Transverse colon (tissue), 4 donors: ENCODE measurements at regions of chr11 and their contacts with region 1.

Region 1: GRCh38 chr11:73184953-73185671 is 33.0 kb upstream of the P2RY2 start:
- DNase-seq: peak; percentile 82
- H3K4me3 ChIP-seq: no peak overlapping the region
- H3K27ac ChIP-seq: peak overlapping the region in 1 of 4 donors; percentile 28
- H3K4me1 ChIP-seq: peaks cover 0 to 17% (median 6%) of the 10 kb centered on the region in 4 donors
- H3K27me3 ChIP-seq: no peaks in the 10 kb centered on the region
- CTCF ChIP-seq: peak; percentile 78 to 93 (median 89)
- EP300 ChIP-seq: no peak
- POLR2A ChIP-seq: no peak

Region 2: GRCh38 chr11:72924568-72925190 is 260.4 kb before region 1 on chr11:
- in situ Hi-C with region 1: loop called in 1 of 4 experiments (anchors 10 kb)
- intact Hi-C with region 1: no loop called
- DNase-seq: no peak
- H3K4me3 ChIP-seq: no peak overlapping the region
- H3K27ac ChIP-seq: no peak overlapping the region
- H3K4me1 ChIP-seq: peaks cover 0 to 5% (median 0%) of the 10 kb centered on the region in 4 donors
- H3K27me3 ChIP-seq: no peaks in the 10 kb centered on the region
- CTCF ChIP-seq: peak; percentile 34 to 62 (median 58)
- EP300 ChIP-seq: no peak
- POLR2A ChIP-seq: no peak

Region 3: GRCh38 chr11:73236854-73237253 is 51.7 kb after region 1 on chr11:
- in situ Hi-C with region 1: loop called in 3 of 4 experiments (anchors 5 kb)
- intact Hi-C with region 1: loop called (anchors 5 kb)
- DNase-seq: peak; percentile 62
- H3K4me3 ChIP-seq: no peak overlapping the region
- H3K27ac ChIP-seq: no peak overlapping the region
- H3K4me1 ChIP-seq: peaks cover 0 to 6% (median 3%) of the 10 kb centered on the region in 4 donors
- H3K27me3 ChIP-seq: no peaks in the 10 kb centered on the region
- CTCF ChIP-seq: peak; percentile 38 to 70 (median 56)
- EP300 ChIP-seq: no peak
- POLR2A ChIP-seq: no peak

Region 4: GRCh38 chr11:73242251-73243079 is 57.4 kb after region 1 on chr11:
- in situ Hi-C with region 1: loop called in 3 of 4 experiments (anchors 5 kb)
- intact Hi-C with region 1: loop called (anchors 5 kb)
- DNase-seq: peak; percentile 81
- H3K4me3 ChIP-seq: peak overlapping the region in 1 of 4 donors; percentile 12
- H3K27ac ChIP-seq: no peak overlapping the region
- H3K4me1 ChIP-seq: peaks cover 0 to 4% (median 0%) of the 10 kb centered on the region in 4 donors
- H3K27me3 ChIP-seq: no peaks in the 10 kb centered on the region
- CTCF ChIP-seq: peak; percentile 75 to 89 (median 80)
- EP300 ChIP-seq: no peak
- POLR2A ChIP-seq: no peak

Region 5: GRCh38 chr11:73288873-73289707 is 104.0 kb after region 1 on chr11:
- in situ Hi-C with region 1: loop called in 1 of 4 experiments (anchors 10 kb)
- intact Hi-C with region 1: loop called (anchors 10 kb)
- DNase-seq: peak; percentile 77
- H3K4me3 ChIP-seq: peak overlapping the region in 1 of 4 donors; percentile 28
- H3K27ac ChIP-seq: peak overlapping the region; percentile 15 to 47 (median 39)
- H3K4me1 ChIP-seq: peaks cover 3 to 13% (median 10%) of the 10 kb centered on the region in 4 donors
- H3K27me3 ChIP-seq: no peaks in the 10 kb centered on the region
- CTCF ChIP-seq: peak; percentile 81 to 89 (median 83)
- EP300 ChIP-seq: no peak
- POLR2A ChIP-seq: no peak